ENCODE measurements at regions of chr2 and their contacts with region 1.

Region 1: GRCh38 chr2:176174824-176175708 is 13.4 kb upstream of the HOXD1 start:
- DNase-seq: no peak
- H3K4me3 ChIP-seq: no peak overlapping the region
- H3K27ac ChIP-seq: no peak overlapping the region
- H3K4me1 ChIP-seq: peaks cover 4% of the 10 kb centered on the region
- H3K27me3 ChIP-seq: peaks cover 99% of the 10 kb centered on the region
- CTCF ChIP-seq: no peak

Region 2: DNA sequence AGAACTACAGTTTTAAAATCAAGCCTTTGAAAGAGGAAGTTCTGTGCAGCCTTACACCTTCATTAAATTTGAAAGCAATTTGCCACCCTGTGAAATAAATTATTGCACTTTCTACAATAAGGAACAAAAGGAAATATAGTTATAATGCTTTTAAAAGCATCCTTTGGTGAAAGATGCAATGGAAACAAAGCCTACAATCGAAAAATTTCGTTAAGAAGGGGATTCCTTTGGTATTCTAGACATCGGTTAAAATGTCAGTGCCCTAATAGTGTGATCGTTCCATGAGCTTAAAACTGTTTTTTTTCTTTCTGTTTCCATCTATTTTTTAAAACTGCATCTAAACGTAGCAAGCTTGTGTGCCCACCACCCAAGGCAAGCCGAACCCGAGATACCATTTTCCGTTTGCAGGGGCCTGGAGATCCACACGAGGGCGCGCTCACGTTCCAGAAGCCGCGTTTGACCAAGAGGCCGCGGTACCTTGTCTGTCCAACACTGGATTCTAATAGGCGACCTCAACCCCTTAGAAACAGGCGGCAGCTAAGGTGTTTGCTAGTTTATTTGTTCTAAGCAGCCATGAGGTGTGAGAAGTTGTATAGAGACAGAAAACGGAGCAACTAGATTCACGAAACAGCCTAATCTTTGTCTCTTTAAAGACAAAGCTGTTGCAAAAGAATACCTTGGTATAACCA is 63.9 kb before region 1 on chr2:
- dilution Hi-C with region 1: no loop called
- DNase-seq: no peak
- H3K4me3 ChIP-seq: no peak overlapping the region
- H3K27ac ChIP-seq: no peak overlapping the region
- H3K4me1 ChIP-seq: peaks cover 2% of the 10 kb centered on the region
- H3K27me3 ChIP-seq: peaks cover 95% of the 10 kb centered on the region
- CTCF ChIP-seq: peak; percentile 55 to 83 (median 75)

Region 3: GRCh38 chr2:176638167-176639015 is 463.3 kb after region 1 on chr2:
- dilution Hi-C with region 1: loop called (anchors 25 kb)
- DNase-seq: no peak
- H3K4me3 ChIP-seq: peak overlapping the region; percentile 50 to 61 (median 61)
- H3K27ac ChIP-seq: no peak overlapping the region
- H3K4me1 ChIP-seq: peaks cover 7% of the 10 kb centered on the region
- H3K27me3 ChIP-seq: peaks cover 19% of the 10 kb centered on the region
- CTCF ChIP-seq: peak; percentile 61 to 81 (median 70)

Measured in keratinocyte (primary cell).